Activated T-helper 1 cell treated with anti-CD3 and anti-CD28 coated beads, Interleukin-12 subunit alpha, Interleukin-12 subunit beta, Interleukin-2, Interleukin-4 antibody, amounts not matched to agents 30 ng/mL and 10 ng/mL and 1 ng/mL, durations not matched to agents 14 hours and 24 hours and 36 hours (primary cell): ENCODE measurements at regions of chr6 and their contacts with region 1.

Region 1: GRCh38 chr6:36678518-36679027 is at the start of gene CDKN1A:
- DNase-seq: peak; percentile 80
- H3K4me3 Mint-ChIP-seq: peak within 1 kb of the TSS; percentile 97
- H3K27ac Mint-ChIP-seq: peak within 1 kb of the TSS; percentile 95
- H3K4me1 Mint-ChIP-seq: peaks cover 67% of the 10 kb centered on the region
- H3K27me3 Mint-ChIP-seq: peaks cover 4% of the 10 kb centered on the region
- total RNA-seq, gene CDKN1A: 105 and 107 TPM in 2 replicates

Region 2: DNA sequence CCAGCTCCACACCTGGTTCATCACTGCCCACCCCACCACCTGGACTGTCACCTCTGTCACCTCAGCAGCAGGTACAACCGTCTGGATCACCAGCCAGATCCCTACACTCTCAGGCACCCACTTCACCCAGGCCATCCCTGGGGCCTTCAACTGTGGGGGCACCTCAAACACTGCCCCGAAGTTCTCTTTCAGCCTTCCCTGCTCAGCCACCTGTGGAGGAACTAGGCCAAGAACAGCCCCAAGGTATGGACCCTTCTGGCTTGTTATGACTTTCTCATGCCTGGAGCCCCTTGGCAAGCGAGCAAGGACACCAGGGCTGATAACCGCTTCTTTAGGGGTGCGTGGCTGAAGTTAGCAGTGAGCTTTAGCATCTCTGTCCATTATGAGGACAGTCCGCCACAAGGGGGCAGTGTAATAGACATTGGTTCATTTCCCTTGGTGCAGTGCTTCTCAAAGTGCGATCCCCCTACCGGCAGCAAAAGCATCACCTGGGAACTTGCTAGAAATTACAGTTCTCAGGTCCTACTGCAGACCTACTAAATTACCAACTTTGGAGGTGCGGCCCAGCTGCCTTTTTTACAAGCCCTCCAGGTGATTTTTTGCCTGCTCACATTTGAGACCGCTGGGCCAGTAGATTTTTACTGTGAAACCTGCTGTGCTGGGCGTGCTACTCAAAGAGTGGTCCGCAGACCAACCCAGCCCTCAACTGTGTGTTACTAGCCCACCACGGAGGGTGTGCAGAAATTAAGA is 376.2 kb before region 1 on chr6:
- intact Hi-C with region 1: loop called (anchors 2 kb)
- DNase-seq: peak; percentile 85
- H3K4me3 Mint-ChIP-seq: no peak overlapping the region
- H3K27ac Mint-ChIP-seq: peak overlapping the region; percentile 18
- H3K4me1 Mint-ChIP-seq: peaks cover 8% of the 10 kb centered on the region
- H3K27me3 Mint-ChIP-seq: peaks cover 24% of the 10 kb centered on the region

Region 3: DNA sequence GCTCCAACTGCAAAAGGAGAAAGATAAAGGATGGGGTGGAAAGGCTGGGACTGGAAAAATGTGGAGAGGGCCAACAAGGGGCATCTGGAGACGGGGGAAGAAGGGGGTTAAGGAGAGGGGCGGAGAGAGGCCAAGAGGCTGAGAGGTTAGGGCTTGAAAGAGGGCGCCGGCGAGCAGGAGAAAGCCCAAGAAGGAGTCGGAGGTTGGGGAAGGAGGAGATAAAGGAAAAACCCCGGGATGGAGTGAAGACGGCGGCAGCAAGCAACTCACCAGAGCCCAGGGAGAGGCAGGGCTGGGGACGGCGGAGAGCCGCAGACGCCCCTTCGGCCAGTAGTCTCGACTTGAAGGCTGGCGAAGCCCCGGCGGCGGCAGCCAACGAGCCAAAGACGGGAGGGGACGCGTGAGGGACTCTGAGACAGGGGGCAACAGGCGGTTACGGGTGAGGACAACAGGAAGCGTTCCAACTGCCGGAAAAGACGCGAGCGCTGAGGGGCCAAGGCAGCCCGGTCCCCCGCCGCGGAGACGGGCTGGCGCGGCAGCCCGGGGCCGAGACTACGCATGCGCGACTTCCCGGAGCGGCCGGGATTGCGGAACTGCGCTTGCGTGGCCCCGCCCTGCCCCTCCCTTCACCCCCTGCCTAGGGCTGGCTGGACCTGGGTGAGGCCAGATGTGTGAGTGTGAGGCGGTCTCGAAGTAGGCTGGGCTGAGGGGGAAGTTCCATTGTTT is 131.5 kb before region 1 on chr6 and contains the start of gene STK38:
- intact Hi-C with region 1: loop called (anchors 2 kb)
- DNase-seq: peak; percentile 84
- H3K4me3 Mint-ChIP-seq: peak within 1 kb of the TSS; percentile 95
- H3K27ac Mint-ChIP-seq: peak within 1 kb of the TSS; percentile 92
- H3K4me1 Mint-ChIP-seq: peaks cover 50% of the 10 kb centered on the region
- H3K27me3 Mint-ChIP-seq: peaks cover 2% of the 10 kb centered on the region
- total RNA-seq, gene STK38: 23.5 and 23.6 TPM in 2 replicates

Region 4: DNA sequence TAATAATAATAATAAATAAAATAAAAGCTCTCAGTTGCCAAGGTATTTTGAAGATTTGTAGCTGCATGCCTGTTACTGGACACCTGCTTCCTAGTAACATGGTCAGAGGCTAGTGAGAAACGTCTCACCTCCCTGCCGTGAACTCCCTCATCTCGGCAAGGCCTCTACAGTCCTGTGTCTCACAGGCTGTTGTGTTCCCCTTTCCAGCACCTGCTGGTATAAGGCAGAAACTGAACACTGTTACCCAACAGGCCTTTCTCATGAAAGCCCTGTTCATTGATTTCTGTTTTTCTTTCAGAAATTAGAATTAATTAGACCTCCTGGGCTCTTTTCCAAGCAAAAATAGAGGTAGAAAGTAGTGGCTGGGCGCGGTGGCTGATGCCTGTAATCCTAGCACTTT is 102.0 kb before region 1 on chr6:
- intact Hi-C with region 1: no loop called
- DNase-seq: no peak
- H3K4me3 Mint-ChIP-seq: no peak overlapping the region
- H3K27ac Mint-ChIP-seq: no peak overlapping the region
- H3K4me1 Mint-ChIP-seq: no peaks in the 10 kb centered on the region
- H3K27me3 Mint-ChIP-seq: no peaks in the 10 kb centered on the region

Region 5: GRCh38 chr6:36623547-36624459 is 54.8 kb before region 1 on chr6:
- intact Hi-C with region 1: loop called (anchors 1 kb)
- DNase-seq: peak; percentile 65
- H3K4me3 Mint-ChIP-seq: no peak overlapping the region
- H3K27ac Mint-ChIP-seq: peak overlapping the region; percentile 9
- H3K4me1 Mint-ChIP-seq: peaks cover 33% of the 10 kb centered on the region
- H3K27me3 Mint-ChIP-seq: no peaks in the 10 kb centered on the region

Region 6: GRCh38 chr6:36735110-36736071 is 56.8 kb after region 1 on chr6:
- intact Hi-C with region 1: loop called (anchors 1 kb)
- DNase-seq: peak; percentile 54
- H3K4me3 Mint-ChIP-seq: peak overlapping the region; percentile 67
- H3K27ac Mint-ChIP-seq: peak overlapping the region; percentile 89
- H3K4me1 Mint-ChIP-seq: peaks cover 41% of the 10 kb centered on the region
- H3K27me3 Mint-ChIP-seq: no peaks in the 10 kb centered on the region

Region 7: DNA sequence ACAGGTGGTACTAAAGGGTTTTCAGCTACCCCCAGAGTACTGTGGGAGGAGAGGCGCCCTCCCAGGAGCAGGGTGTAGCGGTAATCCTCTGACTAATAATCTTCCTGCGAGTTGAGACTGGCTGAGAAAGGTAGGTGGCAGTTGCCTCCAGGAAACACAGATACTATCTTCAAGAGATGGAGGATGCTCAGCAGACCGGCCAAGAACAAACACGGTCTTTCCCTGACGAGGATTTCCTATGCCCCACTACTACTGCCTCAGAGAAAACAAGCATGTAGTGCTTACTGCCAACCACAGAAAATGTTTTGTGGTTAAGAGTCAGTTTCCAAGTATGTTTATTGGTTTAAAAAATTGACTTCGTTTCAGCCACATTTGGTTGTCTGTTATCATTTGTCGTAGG is 234.0 kb after region 1 on chr6:
- intact Hi-C with region 1: loop called (anchors 1 kb)
- DNase-seq: peak; percentile 72
- H3K4me3 Mint-ChIP-seq: peak overlapping the region; percentile 79
- H3K27ac Mint-ChIP-seq: peak overlapping the region; percentile 94
- H3K4me1 Mint-ChIP-seq: peaks cover 57% of the 10 kb centered on the region
- H3K27me3 Mint-ChIP-seq: no peaks in the 10 kb centered on the region